ENCODE measurements at regions of chr11 and their contacts with region 1.

Region 1: DNA sequence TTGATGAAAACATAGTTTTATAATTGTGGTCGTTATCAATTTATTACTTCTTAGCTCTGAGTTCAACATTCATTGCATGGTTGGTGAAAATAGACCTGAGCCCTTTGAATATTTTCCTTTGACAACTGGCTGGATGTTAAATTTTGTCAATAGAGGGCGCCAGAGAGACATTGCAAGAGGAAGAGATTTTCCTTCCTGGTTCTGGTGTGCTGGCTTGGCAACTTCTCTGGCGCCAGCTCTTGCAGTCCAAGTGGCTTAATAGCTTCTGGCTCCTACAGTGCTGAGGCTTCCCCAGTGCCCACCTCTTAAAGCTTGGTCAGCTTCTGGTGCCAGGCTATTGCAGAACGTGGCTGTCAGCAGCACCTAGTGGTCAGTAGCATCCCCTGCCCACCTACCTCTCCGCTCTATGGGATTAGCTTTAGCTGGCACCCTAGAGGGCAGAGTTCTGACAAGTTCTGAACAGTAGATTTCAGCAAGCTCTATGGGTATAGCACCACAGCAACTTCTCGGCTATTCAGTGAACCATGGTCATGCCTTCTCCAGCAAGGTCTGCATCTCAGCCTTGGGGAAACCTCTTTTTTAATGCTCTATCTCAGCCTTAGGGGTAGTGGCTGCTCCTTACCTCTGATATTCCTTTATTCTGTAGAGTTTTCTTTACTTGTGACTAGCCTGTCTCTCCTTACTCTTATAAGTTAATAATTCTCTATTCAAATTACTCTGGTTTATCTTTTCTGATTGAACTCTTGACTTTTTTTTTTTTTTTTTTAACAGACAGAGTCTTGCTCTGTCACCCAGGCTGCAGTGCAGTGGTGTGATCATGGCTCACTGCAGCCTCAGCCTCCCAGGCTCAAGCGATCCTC is 59.4 kb downstream of the ACER3 start:
- DNase-seq: peak; percentile 43 to 76 (median 66)
- H3K4me3 ChIP-seq: peak overlapping the region in 9 of 59 donors; percentile 4 to 32 (median 13)
- H3K27ac ChIP-seq: peak overlapping the region in 23 of 59 donors; percentile 9 to 86 (median 43)
- H3K27me3 ChIP-seq: no peaks in the 10 kb centered on the region
- CTCF ChIP-seq: peak; percentile 77 to 98 (median 90)

Region 2: GRCh38 chr11:76030286-76030685 is 889.8 kb before region 1 on chr11:
- intact Hi-C with region 1: no loop called
- DNase-seq: no peak
- H3K4me3 ChIP-seq: no peak overlapping the region
- H3K27ac ChIP-seq: peak overlapping the region in 9 of 59 donors; percentile 2 to 45 (median 13)
- H3K27me3 ChIP-seq: no peaks in the 10 kb centered on the region
- CTCF ChIP-seq: no peak

Region 3: GRCh38 chr11:76734456-76735420 is 185.4 kb before region 1 on chr11:
- intact Hi-C with region 1: loop called (anchors 5 to 10 kb)
- DNase-seq: no peak
- H3K4me3 ChIP-seq: peak overlapping the region in 5 of 59 donors; percentile 7 to 22 (median 13)
- H3K27ac ChIP-seq: no peak overlapping the region
- H3K27me3 ChIP-seq: no peaks in the 10 kb centered on the region
- CTCF ChIP-seq: peak in 1 of 56 donors; percentile 7

Region 4: GRCh38 chr11:76807206-76807875 is 112.8 kb before region 1 on chr11:
- intact Hi-C with region 1: loop called (anchors 1 to 2 kb)
- DNase-seq: peak; percentile 79 to 89 (median 86)
- H3K4me3 ChIP-seq: peak overlapping the region in 30 of 59 donors; percentile 1 to 48 (median 26)
- H3K27ac ChIP-seq: peak overlapping the region in 5 of 59 donors; percentile 24 to 57 (median 29)
- H3K27me3 ChIP-seq: peaks cover 0 to 5% (median 0%) of the 10 kb centered on the region in 45 donors
- CTCF ChIP-seq: peak; percentile 69 to 96 (median 87)

Region 5: GRCh38 chr11:76860539-76861475 is 59.3 kb before region 1 on chr11 and contains the start of gene ACER3:
- intact Hi-C with region 1: loop called (anchors 5 kb)
- DNase-seq: peak; percentile 77 to 92 (median 86)
- H3K4me3 ChIP-seq: peak within 1 kb of the TSS; percentile 59 to 97 (median 88)
- H3K27ac ChIP-seq: peak within 1 kb of the TSS in 58 of 59 donors; percentile 50 to 94 (median 88)
- H3K27me3 ChIP-seq: no peaks in the 10 kb centered on the region
- CTCF ChIP-seq: peak in 7 of 56 donors; percentile 5 to 18 (median 12)
- total RNA-seq, gene ACER3: 24.6 to 97.5 (median 41.3) TPM

Region 6: GRCh38 chr11:76885390-76886097 is 34.6 kb before region 1 on chr11:
- intact Hi-C with region 1: loop called in 1 of 2 experiments (anchors 5 kb)
- DNase-seq: no peak
- H3K4me3 ChIP-seq: no peak overlapping the region
- H3K27ac ChIP-seq: peak overlapping the region in 42 of 59 donors; percentile 1 to 99 (median 74)
- H3K27me3 ChIP-seq: no peaks in the 10 kb centered on the region
- CTCF ChIP-seq: no peak

Region 7: DNA sequence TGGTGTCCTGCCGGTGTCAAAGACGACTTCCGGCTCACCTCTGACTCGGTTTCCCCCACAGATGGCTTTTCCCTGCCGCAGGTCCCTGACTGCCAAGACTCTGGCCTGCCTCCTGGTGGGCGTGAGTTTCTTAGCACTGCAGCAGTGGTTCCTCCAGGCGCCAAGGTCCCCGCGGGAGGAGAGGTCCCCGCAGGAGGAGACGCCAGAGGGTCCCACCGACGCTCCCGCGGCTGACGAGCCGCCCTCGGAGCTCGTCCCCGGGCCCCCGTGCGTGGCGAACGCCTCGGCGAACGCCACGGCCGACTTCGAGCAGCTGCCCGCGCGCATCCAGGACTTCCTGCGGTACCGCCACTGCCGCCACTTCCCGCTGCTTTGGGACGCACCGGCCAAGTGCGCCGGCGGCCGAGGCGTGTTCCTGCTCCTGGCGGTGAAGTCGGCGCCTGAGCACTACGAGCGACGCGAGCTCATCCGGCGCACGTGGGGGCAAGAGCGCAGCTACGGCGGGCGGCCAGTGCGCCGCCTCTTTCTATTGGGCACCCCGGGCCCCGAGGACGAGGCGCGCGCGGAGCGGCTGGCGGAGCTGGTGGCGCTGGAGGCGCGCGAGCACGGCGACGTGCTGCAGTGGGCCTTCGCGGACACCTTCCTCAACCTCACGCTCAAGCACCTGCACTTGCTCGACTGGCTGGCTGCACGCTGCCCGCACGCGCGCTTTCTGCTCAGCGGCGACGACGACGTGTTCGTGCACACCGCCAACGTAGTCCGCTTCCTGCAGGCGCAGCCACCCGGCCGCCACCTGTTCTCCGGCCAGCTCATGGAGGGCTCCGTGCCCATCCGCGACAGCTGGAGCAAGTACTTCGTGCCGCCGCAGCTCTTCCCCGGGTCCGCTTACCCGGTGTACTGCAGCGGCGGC is 119.6 kb after region 1 on chr11:
- intact Hi-C with region 1: loop called (anchors 5 to 10 kb)
- DNase-seq: peak in 2 of 10 donors; percentile 11 to 47
- H3K4me3 ChIP-seq: peak overlapping the region in 58 of 59 donors; percentile 16 to 69 (median 51)
- H3K27ac ChIP-seq: no peak overlapping the region
- H3K27me3 ChIP-seq: peaks cover 0 to 28% (median 10%) of the 10 kb centered on the region in 45 donors
- CTCF ChIP-seq: peak in 49 of 56 donors; percentile 19 to 60 (median 40)